Testis (tissue), 5 donors: ENCODE measurements at regions of chr6 and their contacts with region 1.

Region 1: GRCh38 chr6:73732845-73733675 is 37.1 kb downstream of the CD109 start:
- DNase-seq: peak; percentile 70
- H3K4me3 ChIP-seq: no peak overlapping the region
- H3K27ac ChIP-seq: no peak overlapping the region
- H3K4me1 ChIP-seq: no peaks in the 10 kb centered on the region
- H3K27me3 ChIP-seq: no peaks in the 10 kb centered on the region
- CTCF ChIP-seq: peak; percentile 54 to 86 (median 83)
- POLR2A ChIP-seq: no peak

Region 2: DNA sequence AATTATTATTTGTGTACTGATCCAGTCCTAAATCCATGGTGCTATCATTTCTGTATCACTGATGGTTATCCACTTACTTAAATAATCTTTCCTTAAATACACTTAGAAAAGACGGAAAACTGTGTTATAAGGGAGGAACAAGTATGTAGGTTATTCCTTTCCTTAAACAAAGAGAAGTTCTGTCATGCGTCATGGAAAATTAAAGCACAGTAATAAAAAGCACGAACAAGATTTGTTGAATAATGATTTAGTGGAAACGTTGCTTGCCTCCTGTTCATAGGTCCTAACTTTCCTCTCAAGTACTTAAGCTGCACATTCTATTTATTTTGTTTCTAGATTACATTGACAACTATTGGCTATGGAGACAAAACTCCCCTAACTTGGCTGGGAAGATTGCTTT is 628.1 kb before region 1 on chr6:
- intact Hi-C with region 1: no loop called
- DNase-seq: no peak
- H3K4me3 ChIP-seq: no peak overlapping the region
- H3K27ac ChIP-seq: no peak overlapping the region
- H3K4me1 ChIP-seq: no peaks in the 10 kb centered on the region
- H3K27me3 ChIP-seq: no peaks in the 10 kb centered on the region
- CTCF ChIP-seq: no peak
- POLR2A ChIP-seq: no peak

Region 3: GRCh38 chr6:73675466-73676098 is 57.5 kb before region 1 on chr6:
- intact Hi-C with region 1: loop called (anchors 10 kb)
- DNase-seq: peak; percentile 88
- H3K4me3 ChIP-seq: no peak overlapping the region
- H3K27ac ChIP-seq: no peak overlapping the region
- H3K4me1 ChIP-seq: no peaks in the 10 kb centered on the region
- H3K27me3 ChIP-seq: no peaks in the 10 kb centered on the region
- CTCF ChIP-seq: peak; percentile 54 to 92 (median 78)
- POLR2A ChIP-seq: no peak

Region 4: DNA sequence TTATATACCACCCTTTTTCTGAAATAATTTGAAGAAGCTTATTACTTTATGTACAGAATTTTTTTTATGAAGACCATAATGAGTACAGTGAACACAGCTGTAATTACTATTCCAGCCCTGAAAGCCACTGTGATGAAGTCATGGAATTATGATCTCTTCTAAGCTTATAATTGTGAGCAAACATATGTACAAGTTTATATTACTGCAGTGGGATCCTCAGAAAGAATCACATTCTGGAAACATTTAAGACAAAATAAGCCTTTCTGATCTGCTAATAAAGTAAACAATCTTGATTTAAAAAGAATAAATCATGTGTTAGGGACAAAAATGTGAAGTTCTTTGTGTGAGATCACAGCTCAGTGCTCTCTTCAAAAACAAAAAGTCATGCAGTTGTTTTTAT is 523.3 kb after region 1 on chr6:
- intact Hi-C with region 1: no loop called
- DNase-seq: no peak
- H3K4me3 ChIP-seq: no peak overlapping the region
- H3K27ac ChIP-seq: no peak overlapping the region
- H3K4me1 ChIP-seq: no peaks in the 10 kb centered on the region
- H3K27me3 ChIP-seq: no peaks in the 10 kb centered on the region
- CTCF ChIP-seq: no peak
- POLR2A ChIP-seq: no peak